Right cardiac atrium (tissue), 5 donors: ENCODE measurements at regions of chrX and their contacts with region 1.

Region 1: GRCh38 chrX:1453951-1454785 is 1.5 kb upstream of the ASMTL start:
- DNase-seq: peak; percentile 84 to 95 (median 94)
- ATAC-seq: peak; percentile 35 to 49
- H3K4me3 ChIP-seq: peak overlapping the region; percentile 76
- H3K27ac ChIP-seq: no peak overlapping the region
- H3K4me1 ChIP-seq: no peaks in the 10 kb centered on the region
- H3K27me3 ChIP-seq: no peaks in the 10 kb centered on the region

Region 2: DNA sequence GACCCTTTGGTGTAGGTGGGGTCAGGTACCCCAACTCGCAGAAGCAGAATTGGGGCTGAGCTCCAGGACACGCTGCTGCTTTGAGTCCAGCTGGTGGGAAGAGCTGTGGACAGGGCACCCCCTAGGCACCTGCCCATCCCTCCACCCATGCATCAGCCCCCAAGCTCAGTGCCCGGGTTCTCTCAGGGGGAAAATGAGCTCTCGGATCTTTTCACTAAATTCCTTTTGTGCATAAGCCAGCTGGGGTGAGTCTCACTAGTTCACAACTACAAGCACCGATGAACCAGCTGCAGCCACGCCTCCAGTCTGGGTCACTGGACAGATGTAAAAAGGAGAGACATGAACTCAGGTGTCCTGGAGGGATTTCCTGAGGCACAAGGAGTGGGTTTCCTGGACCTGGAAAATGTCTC is 528.5 kb before region 1 on chrX:
- intact Hi-C with region 1: no loop called
- DNase-seq: no peak
- ATAC-seq: no peak
- H3K4me3 ChIP-seq: no peak overlapping the region
- H3K27ac ChIP-seq: no peak overlapping the region
- H3K4me1 ChIP-seq: no peaks in the 10 kb centered on the region
- H3K27me3 ChIP-seq: no peaks in the 10 kb centered on the region

Region 3: GRCh38 chrX:1212532-1212931 is 241.6 kb before region 1 on chrX and contains the start of gene CRLF2:
- intact Hi-C with region 1: no loop called
- DNase-seq: no peak
- ATAC-seq: no peak
- H3K4me3 ChIP-seq: no peak within 1 kb of the TSS
- H3K27ac ChIP-seq: no peak within 1 kb of the TSS
- H3K4me1 ChIP-seq: no peaks in the 10 kb centered on the region
- H3K27me3 ChIP-seq: no peaks in the 10 kb centered on the region
- total RNA-seq, gene CRLF2: not detected

Region 4: GRCh38 chrX:1336331-1336943 is 117.7 kb before region 1 on chrX and contains the start of gene IL3RA:
- intact Hi-C with region 1: no loop called
- DNase-seq: peak in 1 of 3 donors; percentile 56
- ATAC-seq: peak; percentile 55 to 87
- H3K4me3 ChIP-seq: peak within 1 kb of the TSS; percentile 58
- H3K27ac ChIP-seq: peak within 1 kb of the TSS; percentile 63
- H3K4me1 ChIP-seq: no peaks in the 10 kb centered on the region
- H3K27me3 ChIP-seq: no peaks in the 10 kb centered on the region
- total RNA-seq, gene IL3RA: 2.6 to 4.4 (median 3.1) TPM

Region 5: GRCh38 chrX:1580735-1581531 is 126.8 kb after region 1 on chrX:
- intact Hi-C with region 1: loop called in 2 of 4 experiments (anchors 5 kb)
- DNase-seq: no peak
- ATAC-seq: peak; percentile 38 to 43
- H3K4me3 ChIP-seq: no peak overlapping the region
- H3K27ac ChIP-seq: no peak overlapping the region
- H3K4me1 ChIP-seq: no peaks in the 10 kb centered on the region
- H3K27me3 ChIP-seq: no peaks in the 10 kb centered on the region